CD8-positive, alpha-beta T cell (primary cell): ENCODE measurements at regions of chrX and their contacts with region 1.

Region 1: GRCh38 chrX:13223868-13224555 is 95.8 kb downstream of the ATXN3L start:
- DNase-seq: peak in 2 of 9 experiments; percentile 4 to 5
- ATAC-seq: no peak
- H3K4me3 ChIP-seq: no peak overlapping the region
- H3K4me3 Mint-ChIP-seq: no peak overlapping the region
- H3K27ac ChIP-seq: no peak overlapping the region
- H3K27ac Mint-ChIP-seq: no peak overlapping the region
- H3K4me1 ChIP-seq: no peaks in the 10 kb centered on the region
- H3K4me1 Mint-ChIP-seq: peaks cover 2% of the 10 kb centered on the region
- H3K27me3 ChIP-seq: no peaks in the 10 kb centered on the region
- H3K27me3 Mint-ChIP-seq: no peaks in the 10 kb centered on the region
- CTCF ChIP-seq: no peak

Region 2: DNA sequence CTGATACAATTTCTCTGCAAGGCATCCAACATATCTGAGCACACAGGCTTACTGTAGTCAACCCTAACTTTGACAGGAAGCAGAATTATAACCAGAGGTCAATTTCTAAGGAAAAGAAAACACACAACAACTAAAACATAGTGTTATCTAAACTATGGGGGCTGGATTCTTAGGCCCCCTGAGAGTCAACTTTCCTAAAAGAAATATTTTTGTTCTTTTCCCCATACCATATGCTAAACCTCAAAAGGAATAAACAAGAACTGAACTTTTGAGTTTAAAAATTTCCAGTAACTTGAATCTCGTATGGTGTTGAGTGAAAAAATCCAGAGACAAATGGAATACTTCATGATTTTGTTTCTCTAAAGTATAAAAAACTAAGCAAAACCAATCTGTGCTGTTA is 53.0 kb after region 1 on chrX:
- CTCF ChIA-PET with region 1: no interaction called
- POLR2A ChIA-PET with region 1: interaction called, 3 read pairs
- intact Hi-C with region 1: loop called in 1 of 2 experiments (anchors 10 kb)
- DNase-seq: no peak
- ATAC-seq: no peak
- H3K4me3 ChIP-seq: no peak overlapping the region
- H3K4me3 Mint-ChIP-seq: no peak overlapping the region
- H3K27ac ChIP-seq: no peak overlapping the region
- H3K27ac Mint-ChIP-seq: no peak overlapping the region
- H3K4me1 ChIP-seq: no peaks in the 10 kb centered on the region
- H3K4me1 Mint-ChIP-seq: peaks cover 2% of the 10 kb centered on the region
- H3K27me3 ChIP-seq: no peaks in the 10 kb centered on the region
- H3K27me3 Mint-ChIP-seq: no peaks in the 10 kb centered on the region
- CTCF ChIP-seq: no peak